Ovary (tissue), 10 donors: ENCODE measurements at regions of chr21 and their contacts with region 1.

Region 1: DNA sequence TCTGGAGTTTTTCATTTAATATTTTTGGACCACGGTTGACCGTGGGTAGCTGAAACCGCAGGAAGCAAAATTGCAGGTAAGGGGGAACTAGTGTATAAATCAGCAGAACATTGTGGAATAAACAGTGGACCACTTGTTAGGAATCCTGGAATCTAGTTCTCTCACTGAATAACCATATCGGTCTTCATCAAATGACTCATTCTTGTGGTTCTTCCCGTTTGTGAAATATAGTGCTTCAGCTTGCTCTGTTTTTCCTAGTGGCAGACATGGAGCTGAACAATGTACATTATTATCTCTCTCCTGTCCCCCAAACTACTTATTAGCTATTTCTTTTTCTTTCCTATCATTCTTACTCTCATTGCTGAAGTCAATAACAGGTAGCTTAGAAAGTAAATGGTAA is 61.9 kb downstream of the HSPA13 start:
- DNase-seq: no peak
- H3K4me3 ChIP-seq: no peak overlapping the region
- H3K27ac ChIP-seq: no peak overlapping the region
- H3K4me1 ChIP-seq: no peaks in the 10 kb centered on the region
- H3K27me3 ChIP-seq: no peaks in the 10 kb centered on the region
- CTCF ChIP-seq: no peak
- EP300 ChIP-seq: no peak
- POLR2A ChIP-seq: no peak

Region 2: GRCh38 chr21:14497825-14498224 is 176.8 kb after region 1 on chr21:
- intact Hi-C with region 1: no loop called
- DNase-seq: no peak
- H3K4me3 ChIP-seq: no peak overlapping the region
- H3K27ac ChIP-seq: no peak overlapping the region
- H3K4me1 ChIP-seq: no peaks in the 10 kb centered on the region
- H3K27me3 ChIP-seq: no peaks in the 10 kb centered on the region
- CTCF ChIP-seq: no peak
- EP300 ChIP-seq: no peak
- POLR2A ChIP-seq: no peak

Region 3: GRCh38 chr21:14741256-14741655 is 420.2 kb after region 1 on chr21:
- intact Hi-C with region 1: no loop called
- DNase-seq: no peak
- H3K4me3 ChIP-seq: no peak overlapping the region
- H3K27ac ChIP-seq: no peak overlapping the region
- H3K4me1 ChIP-seq: no peaks in the 10 kb centered on the region
- H3K27me3 ChIP-seq: no peaks in the 10 kb centered on the region
- CTCF ChIP-seq: no peak
- EP300 ChIP-seq: no peak
- POLR2A ChIP-seq: no peak

Region 4: DNA sequence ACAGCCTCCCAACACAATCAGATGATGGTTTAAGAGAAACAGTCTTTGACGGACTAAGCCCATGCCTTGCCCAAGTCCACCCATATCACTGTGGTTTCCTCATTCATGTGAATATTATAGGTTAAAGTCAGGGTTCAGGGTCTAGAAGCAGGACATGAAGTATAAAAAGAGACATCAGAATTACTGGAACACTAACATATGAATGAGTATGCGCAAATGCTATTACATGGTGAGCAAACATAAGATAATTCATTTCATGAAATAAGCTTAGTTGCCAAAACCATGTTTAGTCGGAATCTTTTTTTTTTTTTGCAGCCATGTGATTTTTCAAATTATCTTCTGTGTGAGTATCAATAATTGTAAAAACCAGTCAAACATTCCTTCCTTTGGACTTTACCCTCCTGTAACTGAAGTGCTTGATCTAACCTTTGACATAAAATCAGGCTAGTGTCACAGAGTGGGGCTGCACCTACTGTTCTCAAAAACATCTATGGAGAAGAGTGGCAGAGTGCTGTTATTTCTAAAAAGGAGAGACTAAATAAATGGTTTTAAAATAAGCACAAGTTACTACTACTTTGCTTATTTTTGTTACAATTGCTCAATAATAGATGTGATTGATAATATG is 828.7 kb after region 1 on chr21:
- intact Hi-C with region 1: loop called in 1 of 4 experiments (anchors 5 kb)
- DNase-seq: no peak
- H3K4me3 ChIP-seq: no peak overlapping the region
- H3K27ac ChIP-seq: no peak overlapping the region
- H3K4me1 ChIP-seq: no peaks in the 10 kb centered on the region
- H3K27me3 ChIP-seq: no peaks in the 10 kb centered on the region
- CTCF ChIP-seq: no peak
- EP300 ChIP-seq: no peak
- POLR2A ChIP-seq: no peak